PC-3 (cell line): ENCODE measurements at regions of chr1 and their contacts with region 1.

Region 1: GRCh38 chr1:26072305-26072704 is 4.9 kb upstream of the TRIM63 start:
- DNase-seq: no peak
- ATAC-seq: no peak; the same call in 1 of the 2 replicates
- H3K4me3 ChIP-seq: no peak overlapping the region
- H3K27ac ChIP-seq: no peak overlapping the region
- H3K4me1 ChIP-seq: peaks cover 15% of the 10 kb centered on the region
- H3K27me3 ChIP-seq: no peaks in the 10 kb centered on the region
- CTCF ChIP-seq: no peak

Region 2: DNA sequence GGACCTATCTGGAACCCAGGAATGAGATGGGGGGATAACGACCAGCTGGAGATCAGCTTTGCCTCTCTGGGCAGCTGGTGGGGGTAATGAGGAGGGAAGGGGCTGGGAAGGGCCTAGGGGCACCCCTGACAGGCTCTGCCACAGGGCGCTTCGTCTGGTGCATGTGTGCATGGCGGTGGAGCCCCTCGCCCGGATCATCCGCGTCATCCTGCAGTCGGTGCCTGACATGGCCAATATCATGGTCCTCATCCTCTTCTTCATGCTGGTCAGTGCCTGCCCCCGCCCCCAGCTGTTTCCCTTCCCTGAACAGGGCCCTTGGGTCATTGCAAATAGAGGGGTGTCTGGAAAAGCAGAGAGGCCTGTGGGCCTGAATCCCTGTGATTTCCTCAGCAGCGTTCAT is 125.5 kb after region 1 on chr1:
- CTCF ChIA-PET with region 1: no interaction called
- POLR2A ChIA-PET with region 1: no interaction called
- intact Hi-C with region 1: no loop called
- DNase-seq: no peak
- ATAC-seq: no peak
- H3K4me3 ChIP-seq: no peak overlapping the region
- H3K27ac ChIP-seq: no peak overlapping the region
- H3K4me1 ChIP-seq: no peaks in the 10 kb centered on the region
- H3K27me3 ChIP-seq: no peaks in the 10 kb centered on the region
- CTCF ChIP-seq: no peak

Region 3: DNA sequence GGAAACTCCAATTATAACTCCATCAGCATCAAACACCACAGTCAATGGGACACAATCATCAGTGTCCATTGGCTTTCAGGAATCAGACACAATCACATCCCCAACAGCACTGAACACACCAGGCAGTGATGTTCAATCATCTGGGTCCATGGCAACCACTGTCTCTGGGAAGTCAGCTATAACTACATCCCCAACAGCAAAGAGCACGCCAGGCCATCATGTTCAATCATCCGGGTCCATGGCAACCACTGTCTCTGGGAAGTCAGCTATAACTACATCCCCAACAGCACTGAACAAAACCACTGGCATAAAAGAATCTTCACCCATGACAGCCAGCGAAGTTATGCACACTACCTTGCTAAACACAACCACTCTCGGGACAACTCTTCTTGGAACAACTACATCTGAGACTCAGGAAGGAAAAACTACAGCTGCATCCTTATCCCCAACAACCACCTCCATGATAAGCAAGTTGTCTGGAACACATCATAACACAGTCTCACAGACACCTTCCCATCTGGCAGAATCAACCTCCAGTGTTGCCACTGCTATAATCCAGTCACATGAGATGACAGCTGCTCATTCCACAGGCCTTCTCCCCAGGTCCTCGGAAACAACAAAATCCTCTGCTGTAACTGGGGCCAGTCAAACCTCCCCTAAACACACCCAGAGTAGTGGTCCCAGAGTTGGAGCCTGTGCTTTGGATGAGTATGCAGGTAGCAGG is 138.0 kb after region 1 on chr1:
- CTCF ChIA-PET with region 1: interaction called, 13 read pairs
- POLR2A ChIA-PET with region 1: no interaction called
- intact Hi-C with region 1: no loop called
- DNase-seq: no peak
- ATAC-seq: no peak
- H3K4me3 ChIP-seq: no peak overlapping the region
- H3K27ac ChIP-seq: no peak overlapping the region
- H3K4me1 ChIP-seq: no peaks in the 10 kb centered on the region
- H3K27me3 ChIP-seq: no peaks in the 10 kb centered on the region
- CTCF ChIP-seq: no peak